ENCODE measurements at regions of chr4 and their contacts with region 1.

Region 1: GRCh38 chr4:3226467-3226866 is 22.5 kb upstream of the MSANTD1 start:
- DNase-seq: peak; percentile 81 to 92 (median 86)
- H3K4me3 ChIP-seq: peak overlapping the region in 2 of 3 experiments; percentile 24 to 66
- H3K4me3 Mint-ChIP-seq: peak overlapping the region; percentile 65 to 78
- H3K27ac ChIP-seq: peak overlapping the region; percentile 99 to 100
- H3K27ac Mint-ChIP-seq: peak overlapping the region; percentile 98 to 99 (median 99)
- H3K4me1 ChIP-seq: peaks cover 50 to 52% of the 10 kb centered on the region in 2 donors
- H3K4me1 Mint-ChIP-seq: peaks cover 47% of the 10 kb centered on the region
- H3K27me3 ChIP-seq: no peaks in the 10 kb centered on the region
- H3K27me3 Mint-ChIP-seq: peaks cover 0 to 4% (median 2%) of the 10 kb centered on the region in 3 donors
- CTCF ChIP-seq: no peak

Region 2: DNA sequence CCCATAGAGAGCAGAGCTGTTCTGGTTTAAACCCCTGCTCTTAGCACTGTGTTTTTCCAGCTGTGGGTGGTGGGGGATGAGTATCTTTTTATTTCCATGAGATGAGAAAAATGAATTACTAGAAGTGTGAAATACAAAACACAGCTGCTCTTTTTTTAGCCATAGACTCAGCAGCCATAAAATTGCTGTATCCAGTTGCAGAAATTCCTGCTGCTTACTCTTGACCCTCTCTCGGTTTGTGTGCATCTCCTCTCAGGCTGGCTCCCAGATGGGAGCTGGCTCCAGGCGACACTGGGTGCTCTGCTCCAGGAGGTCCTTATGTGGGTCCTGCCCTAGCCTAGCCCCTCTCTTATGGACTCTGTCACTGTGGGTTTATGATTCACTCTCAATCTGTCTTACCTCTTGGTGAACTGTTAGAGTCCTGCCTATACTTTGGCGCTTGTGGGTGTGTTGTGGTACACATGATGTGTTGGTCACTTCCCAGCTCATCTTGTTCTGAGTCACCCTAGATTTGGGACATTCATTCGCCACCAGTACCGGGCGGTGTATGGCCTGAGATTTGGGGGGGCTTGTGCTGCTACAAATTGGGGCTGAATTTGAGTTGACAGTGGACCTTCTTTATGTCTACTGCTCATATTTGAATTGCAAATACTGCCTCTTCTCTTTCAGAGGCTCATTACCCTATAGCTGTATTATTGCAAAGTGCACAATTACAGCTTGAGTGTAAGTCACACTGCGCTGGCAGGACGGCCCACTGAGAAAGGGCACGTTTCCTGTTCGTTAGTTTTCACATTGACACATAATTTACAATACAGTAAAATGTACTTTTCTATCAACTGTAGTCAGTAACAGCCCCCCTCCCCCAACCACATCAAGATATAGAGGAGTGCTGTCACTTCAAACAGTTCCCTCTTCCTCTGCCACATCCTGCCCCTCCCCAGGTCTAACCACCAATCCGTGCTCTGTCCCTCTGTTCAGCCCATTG is 24.5 kb before region 1 on chr4:
- intact Hi-C with region 1: loop called in 1 of 2 experiments (anchors 2 kb)
- DNase-seq: peak; percentile 67 to 83 (median 76)
- H3K4me3 ChIP-seq: no peak overlapping the region
- H3K4me3 Mint-ChIP-seq: peak overlapping the region in 1 of 2 donors; percentile 47
- H3K27ac ChIP-seq: peak overlapping the region; percentile 25 to 82
- H3K27ac Mint-ChIP-seq: peak overlapping the region; percentile 58 to 98 (median 91)
- H3K4me1 ChIP-seq: peaks cover 21 to 25% of the 10 kb centered on the region in 2 donors
- H3K4me1 Mint-ChIP-seq: peaks cover 32% of the 10 kb centered on the region
- H3K27me3 ChIP-seq: no peaks in the 10 kb centered on the region
- H3K27me3 Mint-ChIP-seq: peaks cover 0 to 2% (median 0%) of the 10 kb centered on the region in 3 donors
- CTCF ChIP-seq: no peak

Region 3: DNA sequence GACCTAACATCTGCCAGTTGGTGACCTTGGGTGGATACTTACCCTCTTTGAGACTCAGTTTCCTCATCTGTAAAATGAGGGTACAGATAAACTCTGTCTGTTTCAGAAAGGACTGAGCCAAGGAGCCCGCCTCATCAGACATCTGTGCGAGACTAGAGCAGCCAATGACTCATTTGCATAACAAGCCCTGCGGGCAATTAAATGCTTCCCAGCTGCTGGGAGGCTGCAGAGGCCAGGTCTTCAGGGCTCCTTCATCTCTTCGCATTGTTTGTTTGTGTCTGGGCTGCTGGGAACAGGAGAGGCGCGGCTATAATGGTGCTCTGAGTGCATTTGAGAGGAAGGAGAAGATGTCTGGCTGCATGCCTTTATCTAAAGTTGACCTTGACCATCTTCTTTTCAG is 624.7 kb after region 1 on chr4:
- intact Hi-C with region 1: no loop called
- DNase-seq: no peak
- H3K4me3 ChIP-seq: no peak overlapping the region
- H3K4me3 Mint-ChIP-seq: no peak overlapping the region
- H3K27ac ChIP-seq: no peak overlapping the region
- H3K27ac Mint-ChIP-seq: no peak overlapping the region
- H3K4me1 ChIP-seq: no peaks in the 10 kb centered on the region
- H3K4me1 Mint-ChIP-seq: no peaks in the 10 kb centered on the region
- H3K27me3 ChIP-seq: no peaks in the 10 kb centered on the region
- H3K27me3 Mint-ChIP-seq: peaks cover 2 to 9% (median 4%) of the 10 kb centered on the region in 3 donors
- CTCF ChIP-seq: no peak

Measured in CD14-positive monocyte (primary cell).